ENCODE measurements at regions of chr2 and their contacts with region 1.

Region 1: DNA sequence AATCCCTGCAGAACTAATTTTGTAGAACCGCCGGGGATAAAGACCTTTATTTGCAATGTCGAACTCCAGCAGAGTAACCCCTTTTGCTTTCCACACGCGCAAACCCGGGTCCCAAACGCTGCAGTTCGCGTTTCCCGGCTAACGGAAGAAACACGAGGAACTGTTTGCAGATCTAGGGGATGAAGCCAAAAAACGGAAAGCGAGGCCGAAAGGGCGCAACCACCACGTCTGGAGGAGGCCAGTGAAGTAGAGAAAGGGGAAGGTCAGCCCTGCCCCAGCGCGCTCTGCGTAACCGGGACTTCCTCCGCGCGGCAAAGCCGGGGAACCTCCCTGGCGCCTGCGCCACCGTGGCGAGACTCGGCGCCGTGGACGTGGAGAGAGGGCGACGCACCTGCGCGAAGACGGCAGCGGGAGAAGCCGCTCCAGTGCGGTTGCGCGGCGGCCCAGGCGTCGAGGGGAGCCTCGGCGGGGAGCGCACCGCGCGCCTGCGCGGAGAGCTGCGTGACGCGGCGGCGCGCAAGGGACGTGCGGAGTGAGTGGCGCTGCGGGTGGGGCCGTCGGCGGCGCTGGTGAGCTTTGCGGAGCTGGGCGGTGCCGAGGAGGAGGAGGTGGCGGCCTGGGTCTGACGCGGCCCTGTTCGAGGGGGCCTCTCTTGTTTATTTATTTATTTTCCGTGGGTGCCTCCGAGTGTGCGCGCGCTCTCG is at the start of gene PPP1CB:
- DNase-seq: peak; percentile 93 to 100 (median 95)
- ATAC-seq: peak; percentile 85
- H3K4me3 ChIP-seq: peak within 1 kb of the TSS; percentile 63 to 88
- H3K4me3 Mint-ChIP-seq: peak within 1 kb of the TSS; percentile 93
- H3K27ac ChIP-seq: peak within 1 kb of the TSS; percentile 86 to 97
- H3K27ac Mint-ChIP-seq: peak within 1 kb of the TSS; percentile 96
- H3K4me1 ChIP-seq: peaks cover 46% of the 10 kb centered on the region
- H3K4me1 Mint-ChIP-seq: peaks cover 65% of the 10 kb centered on the region
- H3K27me3 ChIP-seq: no peaks in the 10 kb centered on the region
- H3K27me3 Mint-ChIP-seq: no peaks in the 10 kb centered on the region
- CTCF ChIP-seq: no peak
- total RNA-seq, gene PPP1CB: 331 to 334 TPM

Region 2: DNA sequence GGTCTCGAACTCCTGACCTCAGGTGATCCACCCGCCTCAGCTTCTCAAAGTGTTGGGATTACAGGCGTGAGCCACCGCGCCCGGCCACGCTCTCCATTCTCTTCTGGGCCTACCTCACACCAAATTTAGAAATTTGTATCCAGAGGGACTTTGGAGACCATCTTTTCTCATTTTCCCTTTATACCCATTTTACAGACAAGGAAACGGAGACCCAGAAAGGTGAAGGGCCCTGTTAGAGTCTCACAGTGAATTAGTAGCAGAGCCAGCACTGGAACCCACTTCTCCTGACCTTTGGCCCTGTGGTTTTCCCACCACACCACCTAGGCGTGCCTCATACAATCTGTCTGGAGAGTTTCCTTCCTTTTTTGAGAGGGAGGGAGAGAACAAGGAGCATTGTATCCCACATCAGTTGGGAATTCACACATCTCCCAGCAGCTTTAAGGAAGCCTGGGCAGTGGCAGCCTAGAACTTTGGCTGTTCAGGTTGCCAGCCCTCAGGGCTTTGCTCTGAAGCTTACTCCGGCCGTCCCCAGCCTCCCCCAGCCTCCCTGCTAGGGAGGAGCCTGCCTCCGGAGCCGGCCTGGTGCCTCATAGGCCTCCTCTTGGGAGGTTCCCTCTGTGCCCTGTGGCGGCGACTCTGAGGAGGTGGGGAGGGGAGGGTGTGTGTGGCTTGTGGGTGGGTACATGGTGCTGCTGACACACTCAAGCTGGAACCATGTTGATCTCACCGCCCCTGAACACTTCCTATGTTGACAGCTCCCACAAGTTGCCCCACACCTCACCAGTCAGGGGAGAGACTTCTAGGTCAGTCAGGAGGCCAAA is 344.9 kb before region 1 on chr2:
- CTCF ChIA-PET with region 1: no interaction called
- POLR2A ChIA-PET with region 1: no interaction called
- intact Hi-C with region 1: loop called in 1 of 2 experiments (anchors 5 kb)
- DNase-seq: peak; percentile 47 to 93 (median 76)
- ATAC-seq: peak; percentile 60
- H3K4me3 ChIP-seq: no peak overlapping the region
- H3K4me3 Mint-ChIP-seq: peak overlapping the region; percentile 44
- H3K27ac ChIP-seq: peak overlapping the region; percentile 28 to 96
- H3K27ac Mint-ChIP-seq: peak overlapping the region; percentile 91
- H3K4me1 ChIP-seq: peaks cover 75% of the 10 kb centered on the region
- H3K4me1 Mint-ChIP-seq: peaks cover 76% of the 10 kb centered on the region
- H3K27me3 ChIP-seq: no peaks in the 10 kb centered on the region
- H3K27me3 Mint-ChIP-seq: no peaks in the 10 kb centered on the region
- CTCF ChIP-seq: no peak

Region 3: GRCh38 chr2:28681158-28681571 is 70.2 kb before region 1 on chr2:
- CTCF ChIA-PET with region 1: no interaction called
- POLR2A ChIA-PET with region 1: no interaction called
- intact Hi-C with region 1: loop called in 1 of 2 experiments (anchors 2 kb)
- DNase-seq: peak; percentile 14 to 89 (median 57)
- ATAC-seq: peak; percentile 86
- H3K4me3 ChIP-seq: no peak overlapping the region
- H3K4me3 Mint-ChIP-seq: peak overlapping the region; percentile 9
- H3K27ac ChIP-seq: peak overlapping the region in 1 of 2 experiments; percentile 33
- H3K27ac Mint-ChIP-seq: peak overlapping the region; percentile 9
- H3K4me1 ChIP-seq: peaks cover 17% of the 10 kb centered on the region
- H3K4me1 Mint-ChIP-seq: peaks cover 21% of the 10 kb centered on the region
- H3K27me3 ChIP-seq: no peaks in the 10 kb centered on the region
- H3K27me3 Mint-ChIP-seq: no peaks in the 10 kb centered on the region
- CTCF ChIP-seq: no peak

Region 4: DNA sequence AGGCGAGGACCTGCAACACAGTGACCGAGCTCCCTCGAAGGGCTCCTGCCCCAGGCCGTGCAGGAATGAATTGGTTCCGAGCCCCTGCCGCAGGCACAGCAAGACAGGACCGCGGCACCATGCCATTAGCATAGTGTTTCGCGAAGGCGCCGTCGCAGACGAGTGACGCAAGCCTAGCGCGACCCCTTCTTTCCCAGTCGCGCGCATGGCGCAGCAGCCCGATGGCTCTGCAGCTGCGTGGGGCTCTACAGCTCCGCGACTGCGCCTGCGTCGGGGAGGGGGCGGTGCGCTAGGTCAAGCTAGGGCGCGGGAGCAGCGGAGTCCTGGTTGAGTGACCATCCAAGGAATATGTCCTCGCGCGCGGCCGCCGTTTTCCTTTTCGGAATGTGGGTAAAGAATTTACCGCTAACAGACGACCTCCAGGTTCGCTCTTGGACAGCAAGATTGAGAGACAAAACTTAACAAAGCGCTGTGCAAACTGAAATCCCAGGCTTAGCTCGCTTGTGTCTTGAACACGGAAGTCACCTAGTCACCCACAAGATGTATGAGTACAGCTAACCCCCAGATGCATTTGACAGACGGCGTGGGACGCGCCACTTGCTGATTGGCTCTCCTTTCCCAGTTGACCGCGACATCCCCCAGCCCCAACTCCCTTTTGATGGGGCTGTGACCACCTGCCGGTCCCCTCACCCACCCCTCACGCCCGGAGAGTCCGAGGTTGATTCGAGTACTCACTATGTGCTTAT is 118.9 kb after region 1 on chr2 and contains the start of gene TRMT61B:
- CTCF ChIA-PET with region 1: no interaction called
- POLR2A ChIA-PET with region 1: interaction called, 7 read pairs
- intact Hi-C with region 1: loop called (anchors 1 to 2 kb)
- DNase-seq: peak; percentile 89 to 99 (median 97)
- ATAC-seq: peak; percentile 96
- H3K4me3 ChIP-seq: peak within 1 kb of the TSS; percentile 89 to 98
- H3K4me3 Mint-ChIP-seq: peak within 1 kb of the TSS; percentile 94
- H3K27ac ChIP-seq: peak within 1 kb of the TSS; percentile 94 to 95
- H3K27ac Mint-ChIP-seq: peak within 1 kb of the TSS; percentile 99
- H3K4me1 ChIP-seq: peaks cover 28% of the 10 kb centered on the region
- H3K4me1 Mint-ChIP-seq: peaks cover 33% of the 10 kb centered on the region
- H3K27me3 ChIP-seq: no peaks in the 10 kb centered on the region
- H3K27me3 Mint-ChIP-seq: no peaks in the 10 kb centered on the region
- CTCF ChIP-seq: no peak
- total RNA-seq, gene TRMT61B: 17.9 to 22.9 TPM

Region 5: GRCh38 chr2:29115797-29116781 is 364.7 kb after region 1 on chr2:
- CTCF ChIA-PET with region 1: no interaction called
- POLR2A ChIA-PET with region 1: no interaction called
- intact Hi-C with region 1: loop called (anchors 1 to 5 kb)
- DNase-seq: peak; percentile 43 to 89 (median 73)
- ATAC-seq: peak; percentile 59
- H3K4me3 ChIP-seq: peak overlapping the region; percentile 80 to 82
- H3K4me3 Mint-ChIP-seq: peak overlapping the region; percentile 91
- H3K27ac ChIP-seq: peak overlapping the region; percentile 86 to 92
- H3K27ac Mint-ChIP-seq: peak overlapping the region; percentile 95
- H3K4me1 ChIP-seq: peaks cover 39% of the 10 kb centered on the region
- H3K4me1 Mint-ChIP-seq: peaks cover 54% of the 10 kb centered on the region
- H3K27me3 ChIP-seq: no peaks in the 10 kb centered on the region
- H3K27me3 Mint-ChIP-seq: no peaks in the 10 kb centered on the region
- CTCF ChIP-seq: no peak

Region 6: DNA sequence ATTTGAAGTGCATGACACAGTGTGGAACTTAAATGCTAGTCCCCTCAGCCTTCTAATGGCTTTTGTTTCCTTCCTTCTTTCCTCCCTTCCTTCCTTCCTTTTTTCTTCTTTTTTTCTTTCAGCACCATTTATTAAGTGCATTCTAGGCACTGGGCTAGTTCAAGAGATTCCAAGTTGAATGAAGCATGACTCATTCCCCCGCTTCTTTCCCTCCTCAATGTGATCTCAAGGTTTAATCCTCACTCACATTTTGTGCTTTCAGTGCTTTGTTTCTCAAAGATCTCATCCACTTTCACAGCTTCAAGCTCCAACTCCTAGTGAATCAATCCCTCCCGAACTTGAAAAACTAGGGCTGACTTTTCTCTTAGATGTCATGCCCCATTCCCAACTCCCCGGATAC is 1570.1 kb after region 1 on chr2:
- CTCF ChIA-PET with region 1: no interaction called
- POLR2A ChIA-PET with region 1: no interaction called
- intact Hi-C with region 1: no loop called
- DNase-seq: no peak
- ATAC-seq: no peak
- H3K4me3 ChIP-seq: no peak overlapping the region
- H3K4me3 Mint-ChIP-seq: no peak overlapping the region
- H3K27ac ChIP-seq: no peak overlapping the region
- H3K27ac Mint-ChIP-seq: peak overlapping the region; percentile 33
- H3K4me1 ChIP-seq: peaks cover 32% of the 10 kb centered on the region
- H3K4me1 Mint-ChIP-seq: peaks cover 47% of the 10 kb centered on the region
- H3K27me3 ChIP-seq: no peaks in the 10 kb centered on the region
- H3K27me3 Mint-ChIP-seq: no peaks in the 10 kb centered on the region
- CTCF ChIP-seq: no peak

Measured in CD8-positive, alpha-beta T cell (primary cell).